ENCODE measurements at regions of chr19 and their contacts with region 1.

Region 1: GRCh38 chr19:2151339-2152229 is at the start of gene AP3D1:
- DNase-seq: peak; percentile 98
- ATAC-seq: peak; percentile 89
- H3K4me3 ChIP-seq: peak within 1 kb of the TSS; percentile 96
- H3K27ac ChIP-seq: peak within 1 kb of the TSS; percentile 91
- H3K4me1 ChIP-seq: peaks cover 20% of the 10 kb centered on the region
- H3K27me3 ChIP-seq: no peaks in the 10 kb centered on the region
- CTCF ChIP-seq: no peak
- EP300 ChIP-seq: no peak
- POLR2A ChIP-seq: peak; percentile 82
- RAD21 ChIP-seq: no peak
- polyA plus RNA-seq, gene AP3D1: 1.5 to 3.0 TPM

Region 2: DNA sequence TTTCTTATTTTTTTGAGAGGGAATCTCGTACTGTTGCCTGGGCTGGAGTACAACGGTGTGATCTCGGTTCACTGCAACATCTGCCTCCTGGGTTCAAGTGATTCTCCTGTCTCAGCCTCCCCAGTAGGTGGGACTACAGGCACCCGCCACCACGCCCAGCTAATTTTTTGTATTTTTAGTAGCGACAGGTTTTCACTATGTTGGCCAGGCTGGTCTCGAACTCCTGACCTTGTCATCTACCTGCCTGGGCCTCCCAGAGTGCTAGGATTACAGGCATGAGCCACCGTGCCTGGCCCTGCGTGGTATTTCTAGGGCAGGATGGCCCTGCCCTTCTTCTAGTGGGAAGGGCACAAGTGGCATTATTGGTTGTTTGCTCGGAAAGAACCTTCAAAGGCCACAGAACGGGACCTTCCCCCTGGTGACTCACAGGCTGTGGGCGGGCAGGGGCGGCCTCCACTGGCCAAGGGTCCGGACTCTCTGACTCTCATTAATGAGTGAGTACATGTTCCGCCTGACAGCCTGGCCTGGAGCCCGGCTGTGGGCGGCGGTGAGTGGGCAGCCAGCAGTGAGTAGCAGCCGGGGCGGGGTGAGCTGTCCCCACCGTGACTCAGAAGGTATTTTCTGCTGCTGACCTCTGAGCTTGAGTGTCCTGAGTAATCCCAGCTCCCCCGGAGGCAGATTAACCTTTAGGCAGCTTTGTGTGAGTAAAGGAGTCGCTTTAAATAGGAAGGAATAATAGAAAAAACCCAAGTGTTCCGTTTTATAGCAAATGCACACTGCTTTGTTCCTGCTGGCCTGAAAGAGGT is 17.2 kb after region 1 on chr19:
- CTCF ChIA-PET with region 1: interaction called, 12 read pairs
- POLR2A ChIA-PET with region 1: interaction called, 13 read pairs
- RAD21 ChIA-PET with region 1: interaction called, 21 read pairs
- SMC1A ChIA-PET with region 1: interaction called, 9 read pairs
- in situ Hi-C with region 1: no loop called
- intact Hi-C with region 1: no loop called
- DNase-seq: peak; percentile 92
- ATAC-seq: peak; percentile 70
- H3K4me3 ChIP-seq: peak overlapping the region; percentile 92; the same call in 1 of the 2 replicates
- H3K27ac ChIP-seq: peak overlapping the region; percentile 74
- H3K4me1 ChIP-seq: peaks cover 49% of the 10 kb centered on the region
- H3K27me3 ChIP-seq: no peaks in the 10 kb centered on the region
- CTCF ChIP-seq: 0 out of 6 replicates have a peak, but pooled peaks of 1 of the 3 experiments have one; percentile 14
- EP300 ChIP-seq: peak; percentile 52 to 75; a peak in 2 of 4 replicates
- POLR2A ChIP-seq: peak; percentile 59; the same call in 1 of the 2 replicates
- RAD21 ChIP-seq: no peak

Region 3: GRCh38 chr19:2199215-2199614 is 47.6 kb after region 1 on chr19:
- CTCF ChIA-PET with region 1: interaction called, 18 read pairs
- POLR2A ChIA-PET with region 1: no interaction called
- RAD21 ChIA-PET with region 1: interaction called, 3 read pairs
- SMC1A ChIA-PET with region 1: interaction called, 3 read pairs
- in situ Hi-C with region 1: no loop called
- intact Hi-C with region 1: no loop called
- DNase-seq: no peak
- ATAC-seq: peak; percentile 88
- H3K4me3 ChIP-seq: no peak overlapping the region
- H3K27ac ChIP-seq: no peak overlapping the region
- H3K4me1 ChIP-seq: no peaks in the 10 kb centered on the region
- H3K27me3 ChIP-seq: no peaks in the 10 kb centered on the region
- CTCF ChIP-seq: peak; percentile 29 to 59 (median 35); a peak in 5 of 6 replicates
- EP300 ChIP-seq: no peak
- POLR2A ChIP-seq: no peak
- RAD21 ChIP-seq: peak; percentile 29; the same call in 1 of the 2 replicates

Region 4: DNA sequence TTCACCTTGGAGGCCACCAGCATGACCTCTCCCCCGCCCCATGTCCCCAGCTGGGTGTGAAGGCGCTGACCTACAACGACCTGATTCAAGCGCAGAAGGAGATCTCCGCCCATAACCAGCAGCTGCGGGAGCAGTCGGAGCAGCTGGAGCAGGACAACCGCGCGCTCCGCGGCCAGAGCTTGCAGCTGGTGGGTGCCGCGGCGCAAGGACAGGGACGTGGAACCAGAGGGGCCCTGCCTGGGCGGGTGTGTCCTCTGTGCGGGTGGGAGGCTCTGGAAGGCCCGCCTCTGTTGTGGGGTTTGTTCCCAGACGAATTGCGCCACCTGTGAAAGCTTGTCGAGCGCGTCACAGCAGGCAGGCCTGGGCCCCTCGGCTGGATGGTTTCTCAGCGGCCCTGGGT is 62.2 kb after region 1 on chr19:
- CTCF ChIA-PET with region 1: interaction called, 10 read pairs
- POLR2A ChIA-PET with region 1: no interaction called
- RAD21 ChIA-PET with region 1: interaction called, 5 read pairs
- SMC1A ChIA-PET with region 1: interaction called, 4 read pairs
- in situ Hi-C with region 1: no loop called
- intact Hi-C with region 1: no loop called
- DNase-seq: no peak
- ATAC-seq: no peak
- H3K4me3 ChIP-seq: no peak overlapping the region
- H3K27ac ChIP-seq: no peak overlapping the region
- H3K4me1 ChIP-seq: peaks cover 5% of the 10 kb centered on the region
- H3K27me3 ChIP-seq: no peaks in the 10 kb centered on the region
- CTCF ChIP-seq: no peak
- EP300 ChIP-seq: no peak
- POLR2A ChIP-seq: no peak
- RAD21 ChIP-seq: no peak

Region 5: DNA sequence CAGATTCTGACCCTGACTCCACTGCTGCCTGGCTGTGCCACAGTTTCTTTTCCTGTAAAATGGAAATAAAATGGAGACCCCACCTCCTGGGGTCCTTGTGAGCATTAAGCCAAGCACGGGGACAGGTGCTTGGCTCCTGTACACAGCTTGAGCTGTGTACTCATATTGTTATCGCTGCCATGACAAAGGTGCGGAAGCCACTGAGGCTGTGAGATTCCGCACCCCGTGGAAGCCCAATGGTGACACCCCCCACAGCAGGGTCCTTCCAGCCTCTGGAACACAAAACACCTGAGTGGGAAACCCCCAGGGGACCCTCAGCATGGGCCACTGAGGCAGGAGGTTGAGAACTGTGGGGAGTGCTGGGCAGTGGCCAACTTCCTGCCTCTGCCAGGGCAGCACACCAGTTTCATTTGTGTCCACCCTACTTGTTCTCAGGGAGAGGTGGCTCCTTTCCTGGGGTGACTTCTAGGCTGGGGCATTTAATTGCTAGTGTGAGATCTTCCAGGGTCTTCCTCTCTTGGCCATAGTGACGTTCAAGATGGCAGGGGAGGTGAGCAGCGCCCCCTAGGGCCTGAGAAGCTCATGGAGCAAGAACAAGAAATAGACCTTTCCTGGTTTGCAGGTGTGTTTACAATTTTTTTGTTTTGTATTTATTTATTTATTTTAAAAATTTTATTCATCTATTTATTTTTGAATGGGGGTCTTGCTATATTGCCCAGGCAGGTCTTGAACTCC is 110.0 kb after region 1 on chr19:
- CTCF ChIA-PET with region 1: interaction called, 17 read pairs
- POLR2A ChIA-PET with region 1: interaction called, 3 read pairs
- RAD21 ChIA-PET with region 1: interaction called, 13 read pairs
- SMC1A ChIA-PET with region 1: interaction called, 4 read pairs
- in situ Hi-C with region 1: no loop called
- intact Hi-C with region 1: no loop called
- DNase-seq: no peak
- ATAC-seq: peak; percentile 17; the same call in 1 of the 3 replicates
- H3K4me3 ChIP-seq: no peak overlapping the region
- H3K27ac ChIP-seq: no peak overlapping the region
- H3K4me1 ChIP-seq: peaks cover 25% of the 10 kb centered on the region
- H3K27me3 ChIP-seq: no peaks in the 10 kb centered on the region
- CTCF ChIP-seq: peak; percentile 56 to 77 (median 76)
- EP300 ChIP-seq: no peak
- POLR2A ChIP-seq: no peak
- RAD21 ChIP-seq: peak; percentile 50

Region 6: GRCh38 chr19:2315818-2316353 is 164.3 kb after region 1 on chr19:
- CTCF ChIA-PET with region 1: interaction called, 9 read pairs
- POLR2A ChIA-PET with region 1: interaction called, 4 read pairs
- RAD21 ChIA-PET with region 1: interaction called, 5 read pairs
- SMC1A ChIA-PET with region 1: interaction called, 14 read pairs
- in situ Hi-C with region 1: no loop called
- intact Hi-C with region 1: loop called (anchors 2 kb)
- DNase-seq: no peak
- ATAC-seq: peak; percentile 90
- H3K4me3 ChIP-seq: no peak overlapping the region
- H3K27ac ChIP-seq: no peak overlapping the region
- H3K4me1 ChIP-seq: peaks cover 3% of the 10 kb centered on the region; the same call in 1 of the 2 replicates
- H3K27me3 ChIP-seq: no peaks in the 10 kb centered on the region
- CTCF ChIP-seq: peak; percentile 43 to 61 (median 53); a peak in 4 of 6 replicates
- EP300 ChIP-seq: no peak
- POLR2A ChIP-seq: no peak
- RAD21 ChIP-seq: peak; percentile 74

Measured in GM12878 (cell line).